Activated CD4-positive, alpha-beta memory T cell treated with anti-CD3 and anti-CD28 coated beads for 36 hours (primary cell): ENCODE measurements at regions of chr19 and their contacts with region 1.

Region 1: DNA sequence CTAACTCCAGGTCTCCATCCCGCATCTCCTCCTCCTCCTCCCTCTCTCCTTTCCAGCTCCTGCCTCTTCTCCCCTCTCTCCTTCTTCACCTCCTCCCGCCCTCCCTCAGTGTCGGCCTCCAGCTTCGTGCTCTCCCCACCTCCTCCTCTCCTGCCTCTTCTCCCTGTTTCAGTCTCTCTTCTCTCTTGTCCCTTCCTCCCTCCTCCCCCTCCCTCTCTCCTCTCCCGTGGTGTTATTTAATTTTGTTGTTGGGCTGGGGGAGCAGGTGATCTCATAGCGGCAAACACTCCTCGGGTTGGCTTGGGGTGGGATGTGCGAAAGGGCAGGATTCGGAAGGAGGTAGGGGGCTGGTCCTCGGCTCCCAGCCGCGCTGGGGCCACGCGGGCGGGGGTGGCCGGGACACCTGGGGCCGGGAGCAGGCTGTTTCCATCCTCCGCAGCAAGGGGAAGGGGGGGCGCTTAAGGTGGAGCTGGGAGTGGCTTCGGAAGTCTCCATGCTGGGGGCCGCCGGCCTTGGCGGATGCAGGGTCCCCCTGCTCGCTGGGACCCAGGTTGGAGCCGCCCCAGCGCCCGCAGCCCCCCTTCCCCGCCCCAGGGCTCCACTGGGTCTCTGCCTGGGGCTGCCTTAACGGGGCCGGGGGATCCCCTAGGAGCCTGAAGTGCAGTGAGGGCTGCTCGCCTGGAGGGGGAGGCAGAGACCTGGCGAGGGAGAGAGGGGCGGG is at the start of gene CA11:
- DNase-seq: peak; percentile 96
- H3K4me3 Mint-ChIP-seq: peak within 1 kb of the TSS; percentile 82
- H3K27ac Mint-ChIP-seq: peak within 1 kb of the TSS; percentile 77
- H3K4me1 Mint-ChIP-seq: peaks cover 35% of the 10 kb centered on the region
- H3K27me3 Mint-ChIP-seq: no peaks in the 10 kb centered on the region
- total RNA-seq, gene CA11: 12.7 to 15.9 TPM

Region 2: DNA sequence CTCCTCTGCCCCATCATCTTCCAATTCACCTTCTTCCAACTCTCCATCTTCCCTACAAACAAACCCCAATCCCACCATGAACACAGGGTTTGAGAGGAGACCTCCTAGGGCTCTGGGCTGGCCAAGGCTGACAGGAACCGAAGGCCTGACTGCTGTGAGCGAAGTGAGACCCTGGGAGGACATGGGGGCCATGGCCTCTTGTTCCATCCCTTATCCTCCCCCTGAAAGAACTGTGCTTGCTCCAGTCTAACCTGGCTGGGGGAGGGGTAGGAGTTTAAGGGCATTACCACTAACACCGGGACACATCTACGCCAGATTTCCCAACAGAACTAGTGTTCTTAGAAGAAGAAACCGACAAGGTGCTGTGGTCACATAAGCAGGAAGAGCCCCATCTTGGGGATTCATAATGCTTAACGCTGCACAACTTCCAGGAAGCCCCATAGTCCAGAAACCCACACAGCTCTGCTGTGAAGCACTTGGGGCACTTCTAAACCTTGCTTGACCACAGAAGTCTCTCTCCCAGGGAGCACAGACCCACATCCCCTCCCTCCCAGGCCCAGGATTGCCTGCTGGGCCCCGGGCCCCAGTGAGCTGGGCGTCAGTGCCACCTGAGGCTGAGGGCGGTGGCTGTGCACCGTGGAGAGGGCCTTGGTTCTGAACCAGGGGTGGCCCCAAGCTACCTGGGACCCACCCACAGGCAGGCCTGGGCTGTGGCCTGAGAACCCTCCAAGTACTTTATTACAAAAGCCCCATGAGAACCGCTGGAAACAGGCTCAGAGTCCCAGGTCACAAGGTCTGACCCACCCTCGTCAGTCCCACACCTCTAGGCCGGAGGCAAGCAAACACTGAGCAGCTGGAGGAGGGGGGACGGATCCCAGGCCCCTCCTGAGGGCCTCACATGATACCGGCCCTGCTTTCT is 1551.3 kb before region 1 on chr19:
- CTCF ChIA-PET with region 1: no interaction called
- POLR2A ChIA-PET with region 1: no interaction called
- intact Hi-C with region 1: no loop called
- DNase-seq: peak; percentile 83
- H3K4me3 Mint-ChIP-seq: peak overlapping the region; percentile 77
- H3K27ac Mint-ChIP-seq: peak overlapping the region; percentile 98
- H3K4me1 Mint-ChIP-seq: peaks cover 66% of the 10 kb centered on the region
- H3K27me3 Mint-ChIP-seq: no peaks in the 10 kb centered on the region

Region 3: DNA sequence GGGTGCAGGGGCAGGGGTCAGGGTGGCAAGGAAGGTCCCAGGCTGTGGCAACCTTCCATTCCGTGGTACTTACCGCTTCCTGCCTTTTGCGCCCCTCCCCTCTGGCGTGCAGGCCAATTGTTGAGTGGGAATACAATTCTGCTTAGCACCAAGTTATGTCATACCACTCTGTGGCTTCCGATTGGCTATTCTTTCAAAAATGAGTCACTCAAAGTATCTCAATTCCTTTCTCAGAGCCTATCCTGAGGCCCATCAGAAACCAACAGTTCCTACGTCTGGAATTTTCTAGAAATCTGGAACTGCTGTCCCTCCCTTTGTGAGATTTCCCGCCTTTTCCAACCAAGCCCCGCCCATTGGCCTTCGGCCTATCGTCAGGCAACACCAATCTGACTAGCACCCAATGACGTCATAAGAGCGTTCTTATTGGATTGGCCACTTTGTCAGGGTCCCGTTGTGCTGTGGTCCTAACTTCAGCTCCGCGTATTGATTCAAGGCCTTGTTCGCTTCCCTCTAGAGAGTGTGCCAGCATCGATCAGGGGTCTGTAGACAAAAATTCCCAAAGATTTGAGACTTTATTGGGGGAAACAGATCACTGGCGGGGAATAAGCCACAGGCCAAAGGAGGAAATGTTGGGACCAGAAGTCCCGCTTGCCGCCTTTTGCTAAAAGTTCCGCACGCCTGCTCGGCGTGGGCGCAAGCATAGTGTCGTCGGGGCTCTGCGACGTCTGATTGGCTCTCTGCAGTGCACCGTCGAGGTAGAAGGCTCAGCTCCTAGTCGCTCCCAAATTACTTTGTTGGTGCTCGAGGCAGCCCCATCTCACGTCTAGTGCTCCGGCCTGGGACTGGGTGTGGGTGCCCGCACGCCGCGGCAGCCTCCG is 14.9 kb after region 1 on chr19:
- CTCF ChIA-PET with region 1: interaction called, 4 read pairs
- POLR2A ChIA-PET with region 1: no interaction called
- intact Hi-C with region 1: loop called (anchors 2 kb)
- DNase-seq: peak; percentile 86
- H3K4me3 Mint-ChIP-seq: peak overlapping the region; percentile 55
- H3K27ac Mint-ChIP-seq: peak overlapping the region; percentile 79
- H3K4me1 Mint-ChIP-seq: peaks cover 9% of the 10 kb centered on the region
- H3K27me3 Mint-ChIP-seq: no peaks in the 10 kb centered on the region

Region 4: DNA sequence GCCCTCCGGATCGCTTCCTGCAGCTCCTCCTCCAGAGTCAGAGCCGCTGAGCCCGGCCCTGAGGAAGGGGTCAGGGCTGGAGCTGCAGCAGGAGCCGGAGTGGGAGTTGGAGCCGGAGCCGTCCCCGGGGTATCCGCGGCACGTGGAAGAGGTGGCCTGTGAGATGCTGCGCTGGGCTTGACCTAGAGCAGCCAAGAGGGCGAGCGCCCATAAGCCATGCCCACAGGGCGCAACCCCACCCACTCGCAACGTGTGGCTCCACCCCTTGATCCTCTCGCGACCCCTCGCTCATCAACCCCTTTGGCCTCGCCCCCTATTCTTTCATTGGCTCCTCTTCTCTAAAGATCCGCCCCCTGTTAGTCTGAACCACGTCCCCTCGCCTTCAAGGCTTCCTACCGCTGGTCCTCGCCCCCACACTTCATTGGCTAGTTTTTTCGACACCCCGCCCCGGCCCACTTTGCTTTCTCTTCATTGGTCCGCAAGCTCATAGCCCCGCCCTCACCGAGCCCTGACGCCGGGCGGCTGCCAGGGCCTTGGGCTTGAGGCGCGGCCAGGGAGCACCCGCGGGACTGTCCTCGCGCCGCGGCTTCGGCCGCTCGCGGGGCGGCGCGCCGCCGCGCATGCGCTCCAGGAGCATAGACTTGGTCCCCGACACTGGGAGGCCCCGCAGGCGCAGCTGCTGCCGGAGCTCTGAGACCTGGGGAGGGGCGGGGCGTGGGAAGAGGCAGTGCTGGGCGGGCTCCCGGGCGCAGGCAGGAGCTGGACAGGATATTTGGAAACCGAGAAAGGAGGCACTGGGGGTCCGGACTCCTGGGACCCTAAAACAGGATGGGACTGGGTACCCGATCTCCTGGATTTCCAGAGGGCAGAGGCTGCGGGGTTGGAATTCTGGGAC is 68.0 kb after region 1 on chr19:
- CTCF ChIA-PET with region 1: interaction called, 3 read pairs
- POLR2A ChIA-PET with region 1: no interaction called
- intact Hi-C with region 1: loop called (anchors 2 kb)
- DNase-seq: peak; percentile 99
- H3K4me3 Mint-ChIP-seq: peak overlapping the region; percentile 83
- H3K27ac Mint-ChIP-seq: peak overlapping the region; percentile 74
- H3K4me1 Mint-ChIP-seq: peaks cover 11% of the 10 kb centered on the region
- H3K27me3 Mint-ChIP-seq: no peaks in the 10 kb centered on the region

Region 5: GRCh38 chr19:48795055-48795684 is 149.0 kb after region 1 on chr19:
- CTCF ChIA-PET with region 1: interaction called, 7 read pairs
- POLR2A ChIA-PET with region 1: no interaction called
- intact Hi-C with region 1: loop called (anchors 5 kb)
- DNase-seq: peak; percentile 89
- H3K4me3 Mint-ChIP-seq: peak overlapping the region; percentile 89
- H3K27ac Mint-ChIP-seq: peak overlapping the region; percentile 84
- H3K4me1 Mint-ChIP-seq: peaks cover 7% of the 10 kb centered on the region
- H3K27me3 Mint-ChIP-seq: no peaks in the 10 kb centered on the region

Region 6: DNA sequence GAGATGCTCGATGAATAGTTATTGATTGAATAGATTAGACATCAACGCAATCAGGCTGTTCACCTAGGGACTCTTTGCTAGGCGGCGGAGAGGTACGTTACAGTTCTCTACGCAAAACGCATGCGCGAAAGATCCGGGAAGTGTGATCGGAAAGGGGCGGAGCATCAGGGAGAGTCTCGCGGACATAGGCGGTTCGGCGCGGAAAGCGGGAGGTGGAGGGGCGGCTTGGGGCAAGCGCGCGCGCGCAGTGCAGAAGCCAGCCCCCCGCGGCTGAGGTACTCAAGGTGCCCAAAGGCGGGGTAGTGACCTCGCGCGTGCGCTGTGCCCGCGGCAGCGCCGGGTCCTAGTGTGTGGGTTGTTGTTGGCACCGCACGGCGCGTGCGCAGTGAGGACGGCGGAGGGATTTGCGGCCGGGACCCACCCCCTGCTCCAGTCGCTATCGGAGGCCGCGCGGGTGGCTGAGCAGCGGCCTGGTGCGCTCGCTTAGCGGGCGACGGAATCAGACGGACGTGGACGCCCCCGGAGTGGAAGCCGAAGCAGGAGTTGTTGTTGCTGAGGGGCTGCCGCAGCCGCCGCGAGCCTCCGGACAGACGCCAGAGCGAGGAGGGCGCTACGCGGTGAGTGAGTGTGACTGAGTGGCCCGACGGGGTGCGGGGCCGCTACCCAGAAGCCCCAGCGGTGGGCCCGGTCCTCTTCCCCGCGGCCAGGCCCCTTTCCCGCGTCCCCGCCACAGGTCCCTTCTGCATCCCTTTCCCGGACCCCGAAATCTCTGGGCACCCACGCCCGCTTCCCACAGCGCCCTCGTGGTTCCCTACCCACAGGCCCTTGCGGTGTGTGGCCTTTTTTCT is 439.1 kb after region 1 on chr19 and contains the start of gene SNRNP70:
- CTCF ChIA-PET with region 1: no interaction called
- POLR2A ChIA-PET with region 1: no interaction called
- intact Hi-C with region 1: loop called (anchors 1 kb)
- DNase-seq: peak; percentile 99
- H3K4me3 Mint-ChIP-seq: peak within 1 kb of the TSS; percentile 96
- H3K27ac Mint-ChIP-seq: peak within 1 kb of the TSS; percentile 82
- H3K4me1 Mint-ChIP-seq: peaks cover 31% of the 10 kb centered on the region
- H3K27me3 Mint-ChIP-seq: no peaks in the 10 kb centered on the region
- total RNA-seq, gene SNRNP70: 180 to 190 TPM